ENCODE measurements at regions of chr4 and their contacts with region 1.

Region 1: GRCh38 chr4:13548984-13549546 is 4.8 kb upstream of the NKX3-2 start:
- DNase-seq: peak; percentile 65 to 77
- H3K4me3 ChIP-seq: no peak overlapping the region
- H3K27ac ChIP-seq: no peak overlapping the region
- H3K4me1 ChIP-seq: peaks cover 0 to 11% of the 10 kb centered on the region in 2 donors
- H3K27me3 ChIP-seq: peaks cover 34 to 45% of the 10 kb centered on the region in 2 donors
- CTCF ChIP-seq: peak; percentile 71 to 76 (median 72)
- POLR2A ChIP-seq: no peak

Region 2: DNA sequence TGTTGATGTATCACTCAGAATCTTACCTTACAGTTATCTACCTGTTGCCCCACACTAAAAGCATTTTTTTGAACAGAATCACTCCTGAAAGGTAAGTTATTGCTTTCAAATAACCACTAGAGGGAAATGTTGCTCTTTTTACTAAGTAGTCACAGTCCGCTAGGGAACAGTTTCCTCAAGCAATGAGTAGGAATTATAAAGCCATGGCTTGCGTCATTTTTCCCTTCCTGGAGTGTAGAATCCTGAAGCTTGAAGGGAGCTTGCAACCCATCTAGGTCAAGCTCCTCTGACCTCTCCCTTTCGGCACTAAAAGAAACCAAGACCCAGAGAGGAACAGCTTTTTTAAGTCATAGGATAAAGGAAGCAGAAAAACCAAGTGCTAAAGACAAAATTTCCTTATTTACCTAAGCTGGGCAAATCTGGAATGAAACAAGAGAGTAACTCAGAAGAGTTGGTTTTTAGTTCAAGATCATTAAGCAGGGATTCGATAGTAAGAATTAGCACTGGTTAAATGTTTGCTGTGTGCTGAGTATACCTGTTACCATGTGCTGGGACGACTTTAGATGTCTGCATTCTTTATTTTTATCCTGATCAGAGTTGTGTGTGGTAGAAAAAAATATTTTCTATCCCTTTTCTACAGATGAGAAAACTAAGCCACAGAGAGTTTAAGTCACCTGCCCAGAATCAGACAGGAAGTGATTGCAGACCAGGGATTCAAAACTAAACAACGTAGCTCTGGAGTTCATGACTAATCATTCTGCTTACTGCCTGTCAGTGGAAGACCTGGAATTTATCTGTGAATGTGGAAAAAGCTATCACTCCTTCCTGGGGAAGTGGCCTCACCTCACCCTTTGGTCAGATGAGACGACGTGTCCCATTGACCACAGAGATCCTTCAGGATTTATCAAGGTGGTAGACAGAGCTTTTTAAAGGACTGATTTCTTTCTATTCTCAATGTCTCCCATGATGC is 696.4 kb before region 1 on chr4:
- intact Hi-C with region 1: loop called (anchors 5 kb)
- DNase-seq: peak in 1 of 2 donors; percentile 16
- H3K4me3 ChIP-seq: no peak overlapping the region
- H3K27ac ChIP-seq: no peak overlapping the region
- H3K4me1 ChIP-seq: no peaks in the 10 kb centered on the region
- H3K27me3 ChIP-seq: no peaks in the 10 kb centered on the region
- CTCF ChIP-seq: peak; percentile 48 to 73 (median 58)
- POLR2A ChIP-seq: no peak

Measured in uterus (tissue), 4 donors.